PC-9 (cell line): ENCODE measurements at regions of chr5 and their contacts with region 1.

Region 1: DNA sequence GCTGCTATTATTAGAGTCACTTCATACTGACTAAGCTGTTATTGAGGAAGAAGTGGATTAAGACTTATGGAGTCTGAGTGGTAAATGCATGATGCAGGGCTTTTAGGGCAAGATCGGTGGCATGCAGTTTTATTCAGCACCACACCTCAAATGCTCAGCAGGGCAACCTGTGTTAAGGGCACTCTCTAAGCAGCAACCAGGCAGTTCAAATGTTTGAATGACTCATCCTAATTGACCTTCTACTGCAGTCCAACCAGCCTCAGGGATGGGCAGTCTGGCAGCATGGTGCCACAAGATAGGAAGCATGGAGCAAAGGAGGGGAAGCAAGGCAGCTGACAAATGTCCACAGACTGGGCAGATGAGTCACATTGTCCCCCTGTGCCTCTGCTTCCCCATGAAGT is 80.2 kb upstream of the MIER3 start:
- DNase-seq: peak; percentile 78 to 95
- H3K4me3 ChIP-seq: no peak overlapping the region
- H3K27ac ChIP-seq: peak overlapping the region; percentile 89
- H3K4me1 ChIP-seq: peaks cover 46% of the 10 kb centered on the region
- H3K27me3 ChIP-seq: no peaks in the 10 kb centered on the region
- CTCF ChIP-seq: no peak

Region 2: DNA sequence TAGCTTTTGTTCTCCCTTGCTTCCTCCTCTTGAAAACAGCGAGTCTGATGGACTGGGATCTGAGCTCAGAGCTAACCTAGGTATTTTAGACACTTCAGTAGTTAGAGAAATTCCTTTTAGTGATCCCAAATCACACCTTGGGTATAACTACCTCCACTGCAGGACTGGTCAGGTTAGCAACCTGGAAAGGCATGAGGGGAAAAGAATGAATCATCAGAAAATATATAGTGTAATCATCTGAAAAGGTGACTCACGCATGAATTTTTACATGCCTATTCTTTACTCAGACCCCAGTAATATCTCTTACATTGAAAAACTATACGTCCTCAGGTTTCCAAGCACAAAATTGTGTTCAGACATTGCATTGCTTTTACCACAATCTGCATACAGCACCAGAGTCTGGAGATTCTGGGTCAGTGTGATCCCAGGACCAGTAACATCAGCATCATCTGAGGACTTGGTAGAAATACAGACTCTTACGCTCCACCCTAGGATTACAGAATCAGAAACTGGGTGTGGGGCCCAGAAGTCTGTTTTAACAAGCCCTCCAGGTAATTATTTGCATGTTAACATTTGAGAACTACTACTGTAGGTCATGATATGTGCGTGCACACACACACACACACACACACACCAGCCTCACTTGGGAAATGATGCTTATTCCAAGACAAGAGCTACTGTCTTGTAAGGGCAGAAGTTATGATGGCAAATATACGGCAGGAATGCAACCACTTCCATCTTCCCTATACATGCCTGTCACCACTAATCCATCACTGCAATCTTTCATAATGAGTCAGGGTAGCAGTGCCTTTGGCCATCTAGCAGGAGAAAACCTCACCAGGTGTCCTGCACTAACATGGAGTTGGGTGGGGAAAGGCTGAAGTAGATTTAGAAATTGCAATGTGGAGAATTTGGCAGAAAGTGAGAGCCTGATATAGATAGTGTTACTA is 488.4 kb before region 1 on chr5:
- CTCF ChIA-PET with region 1: no interaction called
- POLR2A ChIA-PET with region 1: no interaction called
- intact Hi-C with region 1: no loop called
- DNase-seq: peak; percentile 62 to 97
- H3K4me3 ChIP-seq: no peak overlapping the region
- H3K27ac ChIP-seq: peak overlapping the region; percentile 96
- H3K4me1 ChIP-seq: peaks cover 39% of the 10 kb centered on the region
- H3K27me3 ChIP-seq: no peaks in the 10 kb centered on the region
- CTCF ChIP-seq: no peak

Region 3: DNA sequence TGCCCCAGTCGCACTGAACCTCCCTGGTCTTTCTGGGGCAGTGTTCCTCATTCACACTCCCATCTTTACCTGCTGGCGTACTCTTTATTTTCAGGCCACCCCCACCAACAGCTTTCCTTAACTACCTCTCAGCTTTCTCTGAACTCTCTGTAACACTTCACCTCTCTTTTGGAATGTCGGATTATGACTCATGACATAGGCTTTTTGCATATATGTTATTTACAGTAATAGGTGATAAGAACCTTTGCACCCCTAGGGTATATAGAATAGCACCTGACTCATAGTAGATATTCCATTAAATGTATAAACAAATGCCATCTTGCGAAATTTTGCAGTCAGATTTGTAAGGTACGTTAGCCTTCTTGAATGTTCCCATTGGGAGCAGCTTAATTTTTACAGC is 27.4 kb before region 1 on chr5:
- CTCF ChIA-PET with region 1: no interaction called
- POLR2A ChIA-PET with region 1: no interaction called
- intact Hi-C with region 1: loop called (anchors 1 kb)
- DNase-seq: peak; percentile 42 to 99
- H3K4me3 ChIP-seq: peak overlapping the region; percentile 13; the same call in 1 of the 2 replicates
- H3K27ac ChIP-seq: peak overlapping the region; percentile 74
- H3K4me1 ChIP-seq: peaks cover 44% of the 10 kb centered on the region
- H3K27me3 ChIP-seq: no peaks in the 10 kb centered on the region
- CTCF ChIP-seq: no peak

Region 4: GRCh38 chr5:57072218-57072901 is 40.2 kb after region 1 on chr5:
- CTCF ChIA-PET with region 1: no interaction called
- POLR2A ChIA-PET with region 1: no interaction called
- intact Hi-C with region 1: loop called (anchors 5 kb)
- DNase-seq: no peak
- H3K4me3 ChIP-seq: no peak overlapping the region
- H3K27ac ChIP-seq: no peak overlapping the region
- H3K4me1 ChIP-seq: no peaks in the 10 kb centered on the region
- H3K27me3 ChIP-seq: no peaks in the 10 kb centered on the region
- CTCF ChIP-seq: no peak